Pancreas (tissue), 10 donors: ENCODE measurements at regions of chr9 and their contacts with region 1.

Region 1: GRCh38 chr9:133103183-133103986 is 17.7 kb downstream of the RALGDS start:
- DNase-seq: peak in 5 of 6 donors; percentile 58 to 92 (median 79)
- ATAC-seq: peak; percentile 57 to 90 (median 85)
- H3K4me3 ChIP-seq: no peak overlapping the region
- H3K27ac ChIP-seq: no peak overlapping the region
- H3K4me1 ChIP-seq: no peaks in the 10 kb centered on the region
- H3K27me3 ChIP-seq: no peaks in the 10 kb centered on the region
- CTCF ChIP-seq: peak; percentile 93 to 97 (median 96)

Region 2: DNA sequence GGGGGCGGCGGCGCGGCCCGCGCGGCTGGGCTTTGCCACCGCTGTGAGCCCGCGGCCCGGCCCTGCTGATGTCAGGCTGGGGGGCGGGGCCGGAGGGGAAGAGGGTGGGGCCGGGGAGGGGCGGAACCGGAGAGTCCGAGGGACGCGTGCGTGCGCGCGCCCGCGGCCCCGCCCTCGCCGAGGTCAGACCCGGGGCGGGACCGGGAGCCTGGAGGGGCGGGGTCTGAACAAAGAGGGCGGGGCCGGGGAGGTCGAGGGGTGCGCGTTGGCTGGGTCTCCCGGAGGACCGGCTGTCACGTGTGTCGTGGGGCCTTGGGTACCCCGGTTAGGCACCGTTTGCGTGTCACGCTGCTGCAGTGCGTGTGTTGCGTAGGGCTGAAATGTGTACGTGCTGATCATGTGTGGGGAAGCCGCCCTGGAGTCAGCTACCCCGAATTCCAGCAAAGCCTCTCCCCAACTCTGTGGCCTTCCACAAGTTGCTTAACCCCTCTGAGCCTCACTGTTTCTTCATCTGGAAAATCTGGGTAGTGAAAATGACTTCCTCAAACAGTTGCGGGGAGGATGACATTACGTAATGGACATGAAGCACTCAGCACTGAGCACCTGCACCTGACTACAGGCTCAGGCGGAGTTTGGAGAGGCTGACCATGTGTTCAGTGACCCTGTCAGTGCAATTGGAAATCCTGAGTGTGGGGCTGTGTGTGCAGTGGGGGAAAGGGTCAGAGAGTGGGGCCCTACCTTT is 18.0 kb after region 1 on chr9 and contains the start of gene RALGDS:
- intact Hi-C with region 1: no loop called
- DNase-seq: peak; percentile 88 to 96 (median 92)
- ATAC-seq: peak; percentile 83 to 88 (median 87)
- H3K4me3 ChIP-seq: peak within 1 kb of the TSS; percentile 67 to 83 (median 68)
- H3K27ac ChIP-seq: peak within 1 kb of the TSS; percentile 67 to 89 (median 84)
- H3K4me1 ChIP-seq: peaks cover 20 to 48% (median 26%) of the 10 kb centered on the region in 3 donors
- H3K27me3 ChIP-seq: no peaks in the 10 kb centered on the region
- CTCF ChIP-seq: no peak
- total RNA-seq, gene RALGDS: 16.1 to 31.9 (median 20.3) TPM

Region 3: DNA sequence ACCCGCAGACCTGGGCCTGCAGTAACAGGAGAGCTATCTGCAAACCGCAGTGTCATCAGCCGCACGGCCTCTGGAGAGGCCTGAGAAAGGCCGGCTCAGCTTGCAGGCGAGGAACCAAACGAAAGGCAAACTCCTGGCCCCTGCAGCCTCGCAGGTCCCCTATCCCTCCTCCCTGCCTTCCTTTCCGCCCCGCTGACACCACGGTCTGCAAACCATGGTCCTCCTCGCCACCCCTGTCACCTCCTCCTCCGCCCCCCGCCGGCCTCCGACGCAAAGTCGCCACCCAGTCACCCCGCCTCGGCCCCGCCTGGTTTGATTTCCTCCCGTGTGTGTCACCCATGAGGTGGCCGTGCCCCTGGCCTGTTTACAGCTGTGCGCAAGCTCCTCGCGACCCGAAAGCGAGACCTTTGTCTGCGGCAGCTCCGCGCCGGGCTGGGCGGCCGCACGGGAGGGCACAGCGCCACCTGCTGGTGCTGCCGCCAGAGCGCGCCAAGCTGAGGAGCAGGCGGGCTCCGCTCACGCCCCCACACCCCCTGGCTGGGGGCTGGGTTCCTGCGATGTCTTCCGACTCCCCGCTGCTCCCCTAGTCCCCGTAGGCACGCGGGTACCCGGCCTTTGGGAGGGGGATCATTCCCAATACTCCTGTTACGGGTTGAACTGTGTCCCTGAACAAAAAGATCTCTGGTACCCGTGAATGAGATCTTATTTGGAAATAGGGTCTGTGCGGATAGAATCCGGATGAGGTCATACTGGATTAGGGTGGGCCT is 40.9 kb after region 1 on chr9:
- intact Hi-C with region 1: loop called in 2 of 3 experiments (anchors 2 to 5 kb)
- DNase-seq: peak in 5 of 6 donors; percentile 68 to 92 (median 82)
- ATAC-seq: peak in 3 of 4 donors; percentile 30 to 53 (median 50)
- H3K4me3 ChIP-seq: peak overlapping the region in 2 of 4 donors; percentile 23 to 27
- H3K27ac ChIP-seq: peak overlapping the region in 1 of 4 donors; percentile 16
- H3K4me1 ChIP-seq: peaks cover 6 to 36% (median 8%) of the 10 kb centered on the region in 3 donors
- H3K27me3 ChIP-seq: no peaks in the 10 kb centered on the region
- CTCF ChIP-seq: peak; percentile 90 to 98 (median 97)

Region 4: DNA sequence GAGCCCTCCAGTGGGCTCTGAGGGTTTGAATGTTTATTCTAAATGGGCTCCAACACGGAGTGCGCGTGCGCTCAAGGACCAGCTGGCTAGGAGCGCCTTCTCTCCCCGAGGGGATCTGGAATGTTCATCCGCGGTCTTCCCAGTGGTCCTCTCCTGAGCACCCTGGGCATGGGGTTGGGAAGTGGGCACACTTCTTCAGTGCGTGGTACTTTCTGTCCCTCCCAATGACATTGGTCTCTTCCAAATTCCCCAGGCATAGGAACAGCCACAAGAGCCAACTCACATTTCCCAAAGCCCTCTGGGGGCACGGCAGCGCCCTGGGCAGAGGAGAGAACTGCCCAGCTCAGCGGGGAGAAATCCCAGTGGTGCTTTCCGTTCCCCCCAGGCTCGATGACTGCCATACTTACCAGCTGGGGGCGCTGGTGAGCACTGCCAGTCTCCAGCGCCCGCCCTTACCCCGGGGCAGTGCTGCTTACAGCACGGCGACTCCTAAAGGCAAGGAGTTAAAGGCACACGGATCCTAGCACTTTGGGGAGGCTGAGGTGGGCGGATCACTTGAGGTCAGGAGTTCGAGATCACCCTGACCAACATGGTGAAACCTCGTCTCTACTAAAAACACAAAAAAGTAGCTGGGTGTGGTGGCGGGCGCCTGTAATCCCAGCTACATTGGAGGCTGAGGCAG is 135.6 kb after region 1 on chr9:
- intact Hi-C with region 1: no loop called
- DNase-seq: peak; percentile 54 to 86 (median 76)
- ATAC-seq: peak; percentile 90 to 93 (median 91)
- H3K4me3 ChIP-seq: peak overlapping the region in 2 of 4 donors; percentile 22
- H3K27ac ChIP-seq: peak overlapping the region in 2 of 4 donors; percentile 13 to 77
- H3K4me1 ChIP-seq: peaks cover 0 to 7% (median 0%) of the 10 kb centered on the region in 3 donors
- H3K27me3 ChIP-seq: no peaks in the 10 kb centered on the region
- CTCF ChIP-seq: peak; percentile 55 to 77 (median 74)